Esophagus squamous epithelium (tissue), 5 donors: ENCODE measurements at regions of chr16 and their contacts with region 1.

Region 1: GRCh38 chr16:87636072-87636684 is 33.9 kb downstream of the JPH3 start:
- DNase-seq: peak; percentile 26
- H3K4me3 ChIP-seq: peak overlapping the region in 3 of 4 donors; percentile 9 to 53 (median 13)
- H3K27ac ChIP-seq: no peak overlapping the region
- H3K4me1 ChIP-seq: peaks cover 10 to 17% (median 13%) of the 10 kb centered on the region in 3 donors
- H3K27me3 ChIP-seq: peaks cover 0 to 58% (median 0%) of the 10 kb centered on the region in 4 donors
- CTCF ChIP-seq: peak; percentile 51 to 74 (median 58)
- POLR2A ChIP-seq: no peak

Region 2: GRCh38 chr16:87316923-87317749 is 319.0 kb before region 1 on chr16 and contains the start of gene C16orf95:
- intact Hi-C with region 1: loop called (anchors 10 kb)
- DNase-seq: peak; percentile 66
- H3K4me3 ChIP-seq: peak within 1 kb of the TSS; percentile 77 to 98 (median 90)
- H3K27ac ChIP-seq: peak within 1 kb of the TSS; percentile 95 to 98 (median 97)
- H3K4me1 ChIP-seq: peaks cover 5 to 20% (median 9%) of the 10 kb centered on the region in 3 donors
- H3K27me3 ChIP-seq: no peaks in the 10 kb centered on the region
- CTCF ChIP-seq: peak; percentile 27 to 60 (median 52)
- POLR2A ChIP-seq: peak in 3 of 4 donors; percentile 88 to 94 (median 92)
- total RNA-seq, gene C16orf95: 0.38 to 0.95 (median 0.85) TPM

Region 3: DNA sequence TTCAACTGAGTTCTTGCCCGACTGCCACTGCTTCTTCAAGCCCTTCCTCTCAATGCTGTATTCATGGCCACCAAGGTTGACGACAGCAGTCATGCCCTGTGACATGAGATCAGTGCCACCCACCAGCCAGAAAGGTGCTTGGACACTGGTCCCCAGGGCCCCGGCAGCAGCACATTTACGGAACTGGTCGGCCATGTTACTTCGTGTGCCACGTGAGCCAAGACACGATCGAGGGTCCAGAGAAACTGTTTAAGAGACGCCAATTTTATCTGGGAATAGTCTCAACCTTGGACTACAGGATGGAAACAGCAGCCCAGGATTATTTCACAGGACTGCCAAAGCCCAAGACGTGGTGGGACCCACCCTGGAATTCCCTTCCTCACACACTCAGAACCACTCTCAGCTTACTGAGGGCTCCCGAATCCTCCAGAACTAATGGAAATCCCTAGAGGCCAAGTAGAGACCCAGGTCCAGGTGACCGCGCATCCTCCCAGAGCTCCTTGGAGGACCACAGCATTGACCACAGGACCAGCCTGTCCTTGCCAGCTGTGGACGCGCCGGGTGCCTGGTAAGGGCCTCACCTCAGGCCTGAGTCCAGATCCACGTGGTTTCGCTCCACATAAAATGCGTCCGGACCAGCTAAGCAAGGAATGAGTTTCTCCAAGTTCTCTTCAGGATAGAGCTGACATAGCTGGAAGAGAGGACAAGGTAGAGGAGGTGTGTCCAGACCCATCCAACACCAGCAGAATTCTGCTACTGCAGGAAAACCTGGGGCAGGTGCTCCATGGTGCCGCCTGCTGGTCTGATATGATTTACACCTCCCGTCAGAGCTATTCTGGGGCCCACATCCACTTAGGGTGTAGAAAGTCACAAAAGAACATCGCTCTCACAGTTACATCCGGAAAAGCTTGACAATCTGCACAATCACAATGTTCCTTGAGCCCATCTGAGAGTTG is 215.9 kb before region 1 on chr16:
- intact Hi-C with region 1: loop called (anchors 10 kb)
- DNase-seq: no peak
- H3K4me3 ChIP-seq: no peak overlapping the region
- H3K27ac ChIP-seq: no peak overlapping the region
- H3K4me1 ChIP-seq: peaks cover 0 to 15% (median 0%) of the 10 kb centered on the region in 3 donors
- H3K27me3 ChIP-seq: no peaks in the 10 kb centered on the region
- CTCF ChIP-seq: peak in 1 of 6 experiments; percentile 49
- POLR2A ChIP-seq: no peak

Region 4: GRCh38 chr16:87930456-87930855 is 294.3 kb after region 1 on chr16:
- intact Hi-C with region 1: no loop called
- DNase-seq: no peak
- H3K4me3 ChIP-seq: no peak overlapping the region
- H3K27ac ChIP-seq: no peak overlapping the region
- H3K4me1 ChIP-seq: peaks cover 0 to 4% (median 0%) of the 10 kb centered on the region in 3 donors
- H3K27me3 ChIP-seq: peaks cover 0 to 50% (median 0%) of the 10 kb centered on the region in 4 donors
- CTCF ChIP-seq: no peak
- POLR2A ChIP-seq: no peak